ENCODE measurements at regions of chr14 and their contacts with region 1.

Region 1: DNA sequence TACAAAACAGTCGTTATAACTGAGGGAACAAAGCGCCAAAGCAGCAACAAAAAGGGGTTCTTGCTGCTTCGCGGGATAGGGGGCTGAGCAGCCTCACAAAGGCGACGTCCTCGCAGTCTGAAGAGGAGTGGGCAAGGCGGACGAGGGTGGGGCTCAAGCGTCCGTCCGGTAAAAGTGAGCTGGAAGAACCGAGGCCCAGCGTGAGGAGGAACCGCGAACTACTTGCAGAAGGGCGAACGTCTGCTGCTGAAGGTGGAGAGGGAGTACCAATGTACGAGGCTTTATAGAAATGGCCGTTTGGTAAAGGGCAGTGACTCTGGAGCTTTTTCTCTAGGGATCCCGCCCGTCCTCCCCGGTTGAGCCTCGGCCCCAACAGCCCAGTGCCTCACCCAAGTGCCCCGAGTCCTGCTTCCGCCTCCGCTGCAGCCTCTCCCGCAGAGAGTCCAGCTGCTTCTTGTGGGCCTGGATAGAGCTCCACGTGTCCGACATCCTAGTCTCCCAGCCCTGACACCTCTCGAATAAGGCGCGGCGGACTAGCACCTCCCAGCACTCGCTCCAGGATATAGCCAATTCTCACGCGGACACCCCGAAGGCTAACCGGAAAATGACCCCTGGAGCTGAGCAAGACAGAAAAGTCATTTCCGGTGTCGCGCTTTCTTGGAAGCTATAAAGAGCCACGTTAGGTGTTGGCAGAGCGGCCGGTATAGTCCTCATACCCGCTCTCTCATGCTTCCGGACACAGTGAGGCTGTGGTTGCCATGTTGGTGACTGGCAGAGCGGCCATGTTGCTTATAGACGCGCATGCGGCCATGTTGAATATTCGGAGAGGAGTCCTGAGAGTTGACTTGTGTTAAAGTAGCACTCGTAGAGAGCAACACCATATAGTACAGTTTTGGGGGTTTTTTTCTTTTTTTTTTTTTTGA is at the start of gene METTL3:
- DNase-seq: peak; percentile 95
- H3K4me3 Mint-ChIP-seq: peak within 1 kb of the TSS; percentile 96
- H3K27ac Mint-ChIP-seq: peak within 1 kb of the TSS; percentile 96
- H3K4me1 Mint-ChIP-seq: peaks cover 43% of the 10 kb centered on the region
- H3K27me3 Mint-ChIP-seq: no peaks in the 10 kb centered on the region
- total RNA-seq, gene METTL3: 75.6 to 77.6 TPM

Region 2: GRCh38 chr14:21326972-21327371 is 184.0 kb before region 1 on chr14:
- CTCF ChIA-PET with region 1: no interaction called
- POLR2A ChIA-PET with region 1: no interaction called
- DNase-seq: no peak
- H3K4me3 Mint-ChIP-seq: no peak overlapping the region
- H3K27ac Mint-ChIP-seq: no peak overlapping the region
- H3K4me1 Mint-ChIP-seq: no peaks in the 10 kb centered on the region
- H3K27me3 Mint-ChIP-seq: peaks cover 10% of the 10 kb centered on the region

Region 3: DNA sequence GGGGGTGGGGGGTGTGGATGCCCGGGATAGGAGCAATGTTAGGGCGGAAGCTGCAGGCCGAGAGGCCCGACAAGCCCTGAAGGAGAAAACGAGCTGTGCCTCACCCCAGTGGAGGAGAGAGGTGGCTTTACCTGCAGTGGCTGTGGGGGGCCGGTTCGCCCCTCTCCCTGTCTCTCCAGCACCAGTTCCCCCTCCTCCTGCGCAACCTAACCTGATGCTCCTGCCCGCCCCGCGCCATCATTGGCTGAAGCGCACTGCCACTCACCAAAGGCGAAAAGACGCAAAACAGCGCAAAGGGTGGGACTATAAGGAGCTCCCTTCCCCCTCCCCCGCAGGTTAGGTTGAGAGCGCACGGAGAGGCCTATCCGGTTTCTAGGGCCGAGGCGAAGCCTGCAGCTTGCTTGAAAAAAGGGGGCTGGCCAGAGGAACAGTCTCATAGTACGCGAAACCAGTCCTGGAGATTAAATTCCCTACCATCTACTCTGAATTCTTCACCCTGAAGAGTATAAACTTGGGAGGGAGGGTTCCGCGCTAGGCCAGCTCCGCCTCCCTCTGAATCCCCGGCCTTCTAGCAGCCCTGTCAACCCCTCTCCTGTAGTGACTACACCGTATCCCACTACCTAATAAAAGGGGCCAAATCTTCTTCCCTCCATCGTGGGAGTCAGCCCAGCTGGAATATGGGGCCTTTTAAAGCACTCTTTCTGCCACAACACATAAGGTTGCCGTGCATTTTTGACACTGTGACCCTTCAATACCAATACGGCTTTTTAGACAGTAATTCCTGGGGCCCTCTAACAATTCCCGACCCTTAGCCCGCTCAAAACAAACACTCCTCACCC is 73.7 kb before region 1 on chr14:
- CTCF ChIA-PET with region 1: no interaction called
- POLR2A ChIA-PET with region 1: interaction called, 21 read pairs
- DNase-seq: peak; percentile 99
- H3K4me3 Mint-ChIP-seq: peak overlapping the region; percentile 86
- H3K27ac Mint-ChIP-seq: peak overlapping the region; percentile 76
- H3K4me1 Mint-ChIP-seq: peaks cover 50% of the 10 kb centered on the region
- H3K27me3 Mint-ChIP-seq: no peaks in the 10 kb centered on the region

Region 4: DNA sequence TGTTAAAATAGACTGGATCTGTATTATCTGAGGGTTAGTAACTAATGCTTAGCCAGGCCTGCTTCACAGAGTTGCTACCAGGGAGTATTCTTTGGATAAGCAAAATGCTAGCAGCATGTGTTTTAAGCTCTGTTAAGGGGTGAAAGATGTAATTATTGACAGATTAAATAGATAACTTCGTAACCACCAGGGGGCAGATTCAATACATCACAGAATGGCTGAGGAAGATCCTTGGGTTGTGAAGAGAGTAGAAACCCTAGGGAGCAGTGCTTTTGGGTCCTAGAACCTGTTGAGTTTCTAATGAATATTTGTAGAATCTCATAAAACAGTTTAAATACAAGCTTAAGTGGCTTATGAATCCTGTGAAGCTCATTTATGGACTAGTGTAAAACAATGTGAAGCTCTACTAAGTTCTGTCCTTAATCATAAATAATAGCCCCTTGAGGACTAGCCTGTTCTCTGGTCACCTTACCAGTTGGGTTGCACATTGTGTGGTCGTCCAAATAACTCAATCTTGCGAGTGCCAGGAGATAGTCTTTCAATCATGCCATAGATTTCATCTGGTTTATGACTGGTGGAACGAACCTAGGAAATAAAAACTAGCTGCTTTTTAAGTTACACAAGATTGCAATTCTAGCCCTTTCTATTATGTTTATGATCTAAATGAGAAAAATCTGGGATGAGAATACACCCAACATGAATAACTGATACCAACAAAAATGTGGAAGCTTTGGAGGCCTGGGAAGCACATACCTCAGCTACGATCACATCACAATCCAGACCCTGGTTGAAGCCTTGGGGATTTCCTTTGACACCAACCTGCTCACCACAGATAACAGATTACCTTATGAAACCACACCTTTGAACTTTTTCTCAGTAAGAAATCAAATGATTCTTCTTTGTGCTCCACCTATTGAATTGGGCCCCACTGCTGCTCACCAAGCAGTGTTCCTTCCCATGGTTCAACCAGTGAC is 12.2 kb before region 1 on chr14:
- CTCF ChIA-PET with region 1: interaction called, 45 read pairs
- POLR2A ChIA-PET with region 1: interaction called, 40 read pairs
- DNase-seq: no peak
- H3K4me3 Mint-ChIP-seq: no peak overlapping the region
- H3K27ac Mint-ChIP-seq: peak overlapping the region; percentile 27
- H3K4me1 Mint-ChIP-seq: peaks cover 24% of the 10 kb centered on the region
- H3K27me3 Mint-ChIP-seq: no peaks in the 10 kb centered on the region

Region 5: GRCh38 chr14:21525962-21526671 is 15.1 kb after region 1 on chr14 and contains the start of gene SALL2:
- CTCF ChIA-PET with region 1: interaction called, 4 read pairs
- POLR2A ChIA-PET with region 1: interaction called, 50 read pairs
- DNase-seq: peak; percentile 50
- H3K4me3 Mint-ChIP-seq: peak within 1 kb of the TSS; percentile 71
- H3K27ac Mint-ChIP-seq: no peak within 1 kb of the TSS
- H3K4me1 Mint-ChIP-seq: peaks cover 10% of the 10 kb centered on the region
- H3K27me3 Mint-ChIP-seq: peaks cover 11% of the 10 kb centered on the region
- total RNA-seq, gene SALL2: 1.5 to 1.8 TPM

Region 6: DNA sequence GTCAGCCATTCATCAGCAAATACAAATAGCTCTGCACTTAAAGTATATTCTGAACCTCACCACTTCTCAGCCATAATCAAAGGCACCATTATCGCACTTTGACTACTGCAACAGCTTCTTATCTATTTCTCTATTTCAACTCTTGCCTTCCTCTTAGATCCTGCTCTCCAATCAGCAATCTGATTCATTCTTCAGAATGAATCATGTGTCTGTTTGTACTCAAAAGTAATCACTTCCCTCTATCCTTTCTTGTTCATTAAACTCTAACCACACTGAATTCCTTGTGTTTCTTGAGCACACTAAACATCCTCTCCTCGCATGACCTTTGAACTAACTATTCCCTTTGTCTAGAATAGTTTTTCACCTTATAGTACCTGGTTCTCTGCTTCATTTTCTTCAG is 175.5 kb after region 1 on chr14:
- CTCF ChIA-PET with region 1: no interaction called
- POLR2A ChIA-PET with region 1: no interaction called
- DNase-seq: no peak
- H3K4me3 Mint-ChIP-seq: no peak overlapping the region
- H3K27ac Mint-ChIP-seq: no peak overlapping the region
- H3K4me1 Mint-ChIP-seq: no peaks in the 10 kb centered on the region
- H3K27me3 Mint-ChIP-seq: peaks cover 26% of the 10 kb centered on the region

Measured in activated CD4-positive, alpha-beta memory T cell treated with anti-CD3 and anti-CD28 coated beads, Interleukin-2, amount 10 ng/mL, durations not matched to agents 7 days and 5 days (primary cell).